A549 (cell line): ENCODE measurements at regions of chr20 and their contacts with region 1.

Region 1: DNA sequence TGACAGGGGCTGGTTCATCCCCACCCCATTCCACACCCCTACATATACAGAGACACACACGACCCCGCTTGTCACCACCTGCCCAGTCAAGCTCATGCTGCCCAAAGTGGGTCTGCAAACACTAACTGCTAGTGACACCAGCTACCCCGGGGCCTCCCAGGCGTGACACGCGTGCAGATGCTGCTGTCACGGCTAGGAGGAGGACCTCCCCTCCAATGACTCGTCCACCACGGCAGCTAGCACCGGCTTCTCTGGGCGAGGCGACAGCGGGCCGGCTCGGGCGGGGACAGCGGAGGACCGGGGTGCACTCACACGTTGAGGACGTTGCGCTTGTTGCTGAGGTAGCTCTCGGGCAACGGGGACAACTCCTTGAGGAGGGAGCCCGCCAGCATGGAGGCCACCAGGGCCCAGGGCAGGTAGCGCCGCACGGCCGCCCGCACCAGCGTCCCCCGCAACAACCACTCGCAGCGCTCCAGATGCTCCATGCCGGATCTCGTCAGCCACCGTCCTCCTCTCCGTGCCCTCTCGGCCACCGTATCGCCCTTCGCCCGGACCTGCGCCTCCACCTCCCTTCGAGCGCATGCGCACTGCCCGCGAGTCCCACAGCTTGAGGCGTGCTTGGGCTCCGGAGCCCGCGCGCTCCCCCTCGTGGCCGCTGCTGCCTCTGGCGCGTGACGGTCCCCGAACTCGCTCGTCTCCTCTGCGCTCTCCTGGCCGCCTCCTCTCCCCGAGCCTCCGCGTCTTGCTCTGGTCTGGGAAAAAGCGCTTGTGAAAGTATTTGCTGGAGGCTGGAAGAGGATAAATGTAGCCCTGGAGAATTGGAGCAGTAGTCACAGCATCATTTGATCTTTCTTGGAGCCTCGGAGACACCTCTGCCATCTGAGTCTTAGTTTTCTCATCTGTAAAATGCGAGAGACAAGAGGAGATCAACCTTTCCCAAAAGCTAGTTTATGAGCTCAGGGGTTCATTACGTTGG is at the start of gene FITM2:
- DNase-seq: peak; percentile 96 to 98
- ATAC-seq: peak; percentile 95 to 98
- H3K4me3 ChIP-seq: peak within 1 kb of the TSS; percentile 89
- H3K27ac ChIP-seq: peak within 1 kb of the TSS; percentile 92 to 95
- H3K4me1 ChIP-seq: peaks cover 7% of the 10 kb centered on the region; the same call in 2 of the 3 replicates
- CTCF ChIP-seq: peak; percentile 89
- EP300 ChIP-seq: no peak
- POLR2A ChIP-seq: peak; percentile 88
- RAD21 ChIP-seq: peak; percentile 79 to 88
- polyA plus RNA-seq, gene FITM2: 13.1 and 15.2 TPM in 2 replicates

Region 2: DNA sequence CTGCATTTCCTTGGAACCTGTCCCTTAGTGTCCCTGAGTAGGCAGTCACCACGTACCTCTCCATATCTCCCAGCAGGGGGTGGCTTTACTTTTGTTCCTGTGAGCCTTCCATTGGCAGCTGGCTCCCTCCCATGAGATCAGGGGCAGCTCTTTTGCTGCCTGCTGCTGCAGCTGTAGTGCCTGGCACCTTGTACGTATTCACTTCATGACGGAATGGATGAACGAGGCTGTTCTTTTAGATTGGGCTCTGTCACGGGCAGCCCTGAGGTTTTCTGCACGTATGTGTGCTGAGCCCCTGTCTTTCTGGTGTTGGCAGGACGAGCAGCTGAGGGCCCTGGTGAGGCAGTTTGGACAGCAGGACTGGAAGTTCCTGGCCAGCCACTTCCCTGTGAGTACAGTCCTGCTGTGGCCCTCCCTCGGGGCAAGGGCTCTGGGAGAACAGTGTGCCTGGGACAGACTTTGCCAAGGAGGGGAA is 629.4 kb before region 1 on chr20:
- CTCF ChIA-PET with region 1: no interaction called
- POLR2A ChIA-PET with region 1: no interaction called
- DNase-seq: no peak
- ATAC-seq: peak; percentile 43 to 55; a peak in 3 of 6 replicates
- H3K4me3 ChIP-seq: no peak overlapping the region
- H3K27ac ChIP-seq: no peak overlapping the region
- H3K4me1 ChIP-seq: no peaks in the 10 kb centered on the region
- CTCF ChIP-seq: no peak
- EP300 ChIP-seq: no peak
- POLR2A ChIP-seq: no peak
- RAD21 ChIP-seq: no peak

Region 3: DNA sequence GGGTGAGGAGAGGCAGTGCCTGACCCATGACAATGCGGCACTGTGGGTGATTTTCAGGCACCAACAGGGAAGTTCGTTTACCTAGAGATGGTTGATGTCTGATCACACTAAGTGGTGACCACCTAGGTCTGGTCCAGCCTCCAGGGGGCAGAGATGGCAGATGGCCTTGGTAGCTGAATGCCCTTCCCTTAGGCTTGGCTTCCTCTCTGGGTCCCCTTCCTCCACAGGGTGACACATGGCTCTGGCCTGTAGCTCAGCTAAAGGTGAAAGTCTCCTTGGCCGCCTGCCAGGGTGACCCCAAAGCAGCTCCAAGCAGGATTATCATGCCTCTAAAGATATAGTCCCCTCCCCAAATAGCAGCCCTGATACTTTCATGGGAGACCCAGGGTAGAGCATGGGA is 57.4 kb before region 1 on chr20:
- CTCF ChIA-PET with region 1: interaction called, 16 read pairs
- POLR2A ChIA-PET with region 1: no interaction called
- DNase-seq: peak in 1 of 2 experiments; percentile 23
- ATAC-seq: peak in 1 of 2 experiments; percentile 62; a peak in 3 of 6 replicates
- H3K4me3 ChIP-seq: no peak overlapping the region
- H3K27ac ChIP-seq: no peak overlapping the region
- H3K4me1 ChIP-seq: no peaks in the 10 kb centered on the region
- CTCF ChIP-seq: no peak
- EP300 ChIP-seq: no peak
- POLR2A ChIP-seq: no peak
- RAD21 ChIP-seq: no peak

Region 4: GRCh38 chr20:44271915-44272663 is 38.9 kb before region 1 on chr20:
- CTCF ChIA-PET with region 1: interaction called, 15 read pairs
- POLR2A ChIA-PET with region 1: no interaction called
- DNase-seq: no peak
- ATAC-seq: peak in 1 of 2 experiments; percentile 36; a peak in 1 of 6 replicates
- H3K4me3 ChIP-seq: no peak overlapping the region
- H3K27ac ChIP-seq: no peak overlapping the region
- H3K4me1 ChIP-seq: no peaks in the 10 kb centered on the region
- CTCF ChIP-seq: 0 out of 3 replicates have a peak, but pooled peaks have one; percentile 12
- EP300 ChIP-seq: no peak
- POLR2A ChIP-seq: no peak
- RAD21 ChIP-seq: no peak

Region 5: GRCh38 chr20:44294674-44295073 is 16.3 kb before region 1 on chr20:
- CTCF ChIA-PET with region 1: interaction called, 42 read pairs
- POLR2A ChIA-PET with region 1: no interaction called
- DNase-seq: no peak
- ATAC-seq: no peak
- H3K4me3 ChIP-seq: no peak overlapping the region
- H3K27ac ChIP-seq: no peak overlapping the region
- H3K4me1 ChIP-seq: no peaks in the 10 kb centered on the region
- CTCF ChIP-seq: no peak
- EP300 ChIP-seq: no peak
- POLR2A ChIP-seq: no peak
- RAD21 ChIP-seq: no peak

Region 6: GRCh38 chr20:44475694-44476560 is 165.0 kb after region 1 on chr20 and contains the start of gene TTPAL:
- CTCF ChIA-PET with region 1: interaction called, 12 read pairs
- POLR2A ChIA-PET with region 1: no interaction called
- DNase-seq: peak; percentile 81 to 88
- ATAC-seq: peak; percentile 98
- H3K4me3 ChIP-seq: peak within 1 kb of the TSS; percentile 92
- H3K27ac ChIP-seq: peak within 1 kb of the TSS; percentile 91 to 95
- H3K4me1 ChIP-seq: peaks cover 12% of the 10 kb centered on the region; the same call in 2 of the 3 replicates
- CTCF ChIP-seq: peak; percentile 20; the same call in 2 of the 3 replicates
- EP300 ChIP-seq: no peak
- POLR2A ChIP-seq: peak; percentile 99
- RAD21 ChIP-seq: peak; percentile 9 to 48; a peak in 2 of 5 replicates
- polyA plus RNA-seq, gene TTPAL: 9.2 and 11.0 TPM in 2 replicates

Region 7: DNA sequence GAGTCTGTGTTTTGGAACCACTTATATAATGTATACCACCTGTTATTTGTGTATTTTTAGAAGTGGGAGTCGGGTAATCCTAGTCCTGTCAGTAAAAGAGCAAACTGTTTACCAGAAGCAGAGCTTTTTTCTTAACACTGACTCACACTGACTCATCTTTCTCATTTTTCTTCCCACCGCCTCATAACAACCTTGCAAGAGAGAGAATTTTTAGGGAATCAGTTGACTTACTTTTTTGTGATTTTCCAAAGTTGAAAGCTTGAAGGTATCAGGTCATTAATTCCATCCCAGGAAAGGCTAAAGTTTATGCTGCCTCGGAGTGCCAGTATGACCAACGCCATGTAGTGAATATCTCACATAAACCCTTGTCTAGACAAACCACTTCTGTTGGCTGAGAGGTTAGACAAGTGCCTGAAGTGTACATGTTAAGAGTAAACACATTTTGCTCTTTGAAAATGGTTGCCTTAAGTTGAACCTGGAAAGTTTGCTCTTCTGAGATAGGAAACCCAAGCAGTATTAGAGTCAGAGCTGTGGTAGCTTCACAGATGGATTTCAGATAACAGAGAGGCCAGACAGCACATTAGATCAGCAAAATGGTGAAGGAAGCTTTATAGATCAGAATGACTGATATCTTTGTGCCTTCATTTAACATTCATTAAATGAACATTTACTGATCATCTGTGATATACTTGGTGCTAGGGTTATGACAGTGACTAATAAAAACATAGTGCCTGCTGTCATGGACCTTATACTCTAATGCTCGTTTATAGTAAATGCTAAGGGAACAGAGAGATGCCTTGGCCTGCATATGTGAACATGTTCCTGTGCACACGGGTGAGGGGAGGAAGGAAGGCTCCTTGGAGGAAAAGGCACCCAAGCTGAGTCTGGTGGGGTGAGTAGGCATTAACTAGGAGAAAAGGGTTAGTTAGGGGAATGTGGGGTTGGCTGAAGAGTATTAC is 242.3 kb after region 1 on chr20:
- CTCF ChIA-PET with region 1: no interaction called
- POLR2A ChIA-PET with region 1: no interaction called
- DNase-seq: peak in 1 of 2 experiments; percentile 46
- ATAC-seq: peak; percentile 79 to 83; a peak in 5 of 6 replicates
- H3K4me3 ChIP-seq: no peak overlapping the region
- H3K27ac ChIP-seq: peak overlapping the region; percentile 43 to 75
- H3K4me1 ChIP-seq: peaks cover 40% of the 10 kb centered on the region
- CTCF ChIP-seq: no peak
- EP300 ChIP-seq: no peak
- POLR2A ChIP-seq: no peak
- RAD21 ChIP-seq: no peak